HAP-1 (cell line): ENCODE measurements at regions of chr2 and their contacts with region 1.

Region 1: GRCh38 chr2:127313406-127313805 is 19.5 kb upstream of the ERCC3 start:
- DNase-seq: no peak
- H3K4me3 ChIP-seq: no peak overlapping the region
- H3K4me1 ChIP-seq: no peaks in the 10 kb centered on the region
- H3K27me3 ChIP-seq: no peaks in the 10 kb centered on the region

Region 2: DNA sequence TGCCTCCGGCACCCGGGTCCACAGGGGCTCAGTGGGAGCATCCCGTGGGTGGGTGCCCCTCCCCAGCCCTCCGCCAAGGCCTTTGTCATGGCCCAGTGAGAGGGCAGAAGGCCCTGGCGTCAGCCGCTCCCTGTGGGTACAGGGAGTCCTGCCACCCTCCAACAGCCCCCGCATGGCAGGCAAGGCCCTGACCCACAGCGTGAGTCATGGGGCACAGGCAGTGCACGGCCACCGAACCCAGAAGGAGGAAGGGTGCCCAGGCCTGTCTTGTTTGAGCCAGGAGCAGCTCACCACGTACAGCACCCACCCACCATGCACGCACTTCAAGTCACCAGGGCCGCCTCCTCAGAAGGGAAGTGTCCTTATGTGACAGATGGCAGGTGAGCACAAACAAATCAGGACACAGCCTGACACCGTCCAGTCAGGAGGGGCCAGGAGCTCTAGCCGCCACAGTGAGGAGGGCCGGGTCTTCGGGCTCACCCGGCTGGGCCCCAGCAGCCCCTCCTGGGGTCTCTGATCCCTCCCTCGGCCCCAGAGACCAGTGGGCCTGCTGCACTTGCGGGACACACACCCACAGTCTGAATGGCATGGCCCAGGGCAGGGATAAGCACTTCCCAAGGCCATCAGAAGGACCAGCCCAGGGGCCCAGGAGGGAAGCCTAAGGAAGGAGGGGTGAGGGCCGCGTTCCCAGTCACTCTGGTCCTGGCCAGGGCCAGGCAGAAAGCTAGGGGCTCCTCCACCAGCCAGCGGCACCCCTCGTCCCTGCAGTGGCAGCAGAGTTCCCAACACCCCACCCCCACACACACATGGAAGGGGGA is 232.3 kb before region 1 on chr2:
- in situ Hi-C with region 1: no loop called
- DNase-seq: no peak
- H3K4me3 ChIP-seq: no peak overlapping the region
- H3K4me1 ChIP-seq: no peaks in the 10 kb centered on the region
- H3K27me3 ChIP-seq: no peaks in the 10 kb centered on the region

Region 3: GRCh38 chr2:127486247-127487058 is 173.0 kb after region 1 on chr2:
- in situ Hi-C with region 1: loop called (anchors 10 kb)
- DNase-seq: no peak
- H3K4me3 ChIP-seq: no peak overlapping the region
- H3K4me1 ChIP-seq: no peaks in the 10 kb centered on the region; the same call in 1 of the 2 replicates
- H3K27me3 ChIP-seq: no peaks in the 10 kb centered on the region